Activated naive CD4-positive, alpha-beta T cell treated with anti-CD3 and anti-CD28 coated beads, Interleukin-2, amount 10 ng/mL, durations not matched to agents 7 days and 5 days (primary cell): ENCODE measurements at regions of chr4 and their contacts with region 1.

Region 1: DNA sequence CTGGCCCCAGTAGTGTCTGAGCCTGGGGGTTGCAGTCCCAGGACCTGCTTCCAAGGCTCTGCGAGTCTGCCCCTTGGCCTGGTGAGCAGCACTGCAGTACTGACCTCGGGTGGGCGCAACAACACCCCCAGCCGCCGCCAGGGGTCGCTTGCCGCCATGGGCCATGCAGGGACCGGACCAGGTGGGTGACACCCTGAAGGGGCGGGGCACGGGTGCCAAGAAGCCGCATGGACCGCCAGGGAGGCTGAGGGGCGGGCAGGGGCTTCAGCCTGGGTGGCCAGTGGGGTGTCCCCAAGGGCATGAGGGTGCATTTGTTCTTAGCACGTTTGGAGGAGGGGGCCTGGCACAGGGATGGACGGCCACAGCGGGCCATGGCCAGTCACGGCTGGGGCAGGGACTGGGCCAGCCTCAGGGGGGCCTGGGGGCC is 25.0 kb downstream of the TACC3 start:
- DNase-seq: peak; percentile 85
- H3K4me3 Mint-ChIP-seq: no peak overlapping the region
- H3K27ac Mint-ChIP-seq: no peak overlapping the region
- H3K4me1 Mint-ChIP-seq: peaks cover 5% of the 10 kb centered on the region
- H3K27me3 Mint-ChIP-seq: no peaks in the 10 kb centered on the region

Region 2: DNA sequence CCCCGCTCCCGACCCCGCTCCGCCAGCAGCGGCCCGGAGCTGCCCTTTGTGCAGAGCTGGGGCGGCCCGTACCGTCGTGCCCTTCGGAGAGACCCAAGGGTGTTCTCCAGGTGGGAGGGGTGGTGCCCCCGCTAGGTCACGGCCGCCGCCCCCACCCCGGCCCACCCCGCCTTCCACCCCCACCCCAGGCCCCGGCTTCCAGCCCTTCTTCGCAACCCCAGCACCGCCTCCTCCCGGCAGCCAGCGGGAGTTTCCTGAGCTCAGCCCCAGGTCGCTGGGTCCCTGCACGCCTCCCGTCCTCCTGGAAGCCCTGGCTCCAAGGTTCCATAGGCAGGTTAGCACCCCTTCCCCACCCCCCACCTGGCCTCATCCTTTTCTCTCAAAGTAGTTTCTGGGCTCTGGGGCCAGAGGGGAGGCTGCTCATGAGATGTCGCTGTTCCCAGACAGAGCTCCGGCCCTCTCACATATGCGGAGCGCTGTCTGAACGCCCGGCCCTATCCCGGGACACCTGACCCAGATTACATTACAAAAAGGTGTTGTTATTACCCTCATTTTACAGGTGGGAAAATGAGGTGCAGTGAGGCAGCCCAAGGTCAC is 21.6 kb after region 1 on chr4:
- CTCF ChIA-PET with region 1: interaction called, 13 read pairs
- DNase-seq: peak; percentile 59
- H3K4me3 Mint-ChIP-seq: peak overlapping the region; percentile 56
- H3K27ac Mint-ChIP-seq: no peak overlapping the region
- H3K4me1 Mint-ChIP-seq: peaks cover 7% of the 10 kb centered on the region
- H3K27me3 Mint-ChIP-seq: peaks cover 76% of the 10 kb centered on the region

Region 3: DNA sequence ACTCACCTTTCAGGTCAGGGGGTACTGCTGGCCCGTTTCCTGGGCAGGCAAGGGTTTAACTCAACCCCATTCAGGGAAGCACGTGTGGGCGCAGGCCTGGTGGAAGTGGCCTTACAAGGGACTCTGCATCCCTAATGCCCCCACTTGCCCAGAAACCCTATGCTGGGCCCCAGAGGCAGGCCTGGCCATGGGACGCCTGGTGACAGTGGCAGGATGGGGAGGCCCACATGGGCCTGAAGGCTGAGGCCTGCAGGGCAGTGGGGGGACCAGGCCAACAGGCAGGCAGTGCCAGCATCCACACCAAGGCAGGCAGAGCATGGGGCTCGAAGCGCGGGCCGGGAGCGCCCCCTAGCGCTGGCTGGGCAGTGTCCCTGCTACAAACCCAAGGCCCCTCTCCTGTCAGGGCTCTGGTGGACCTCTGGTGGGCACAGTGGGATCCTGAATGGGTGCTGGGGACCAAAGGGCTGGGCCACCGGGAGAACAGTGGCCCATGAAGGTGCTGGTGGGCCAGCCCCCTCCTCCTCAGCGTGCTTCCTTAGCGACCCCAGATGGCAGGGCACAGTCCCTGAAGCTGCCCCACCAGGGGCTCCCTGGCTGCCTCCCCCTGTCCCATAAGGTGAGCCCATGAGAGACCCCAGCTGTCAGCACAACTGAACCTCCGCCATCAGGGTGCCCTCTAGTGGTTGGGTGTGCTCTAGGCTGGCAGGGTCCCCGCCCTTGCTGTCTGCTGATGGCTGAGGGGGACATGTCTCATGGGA is 63.7 kb after region 1 on chr4:
- CTCF ChIA-PET with region 1: interaction called, 63 read pairs
- DNase-seq: peak; percentile 82
- H3K4me3 Mint-ChIP-seq: no peak overlapping the region
- H3K27ac Mint-ChIP-seq: no peak overlapping the region
- H3K4me1 Mint-ChIP-seq: no peaks in the 10 kb centered on the region
- H3K27me3 Mint-ChIP-seq: no peaks in the 10 kb centered on the region

Region 4: DNA sequence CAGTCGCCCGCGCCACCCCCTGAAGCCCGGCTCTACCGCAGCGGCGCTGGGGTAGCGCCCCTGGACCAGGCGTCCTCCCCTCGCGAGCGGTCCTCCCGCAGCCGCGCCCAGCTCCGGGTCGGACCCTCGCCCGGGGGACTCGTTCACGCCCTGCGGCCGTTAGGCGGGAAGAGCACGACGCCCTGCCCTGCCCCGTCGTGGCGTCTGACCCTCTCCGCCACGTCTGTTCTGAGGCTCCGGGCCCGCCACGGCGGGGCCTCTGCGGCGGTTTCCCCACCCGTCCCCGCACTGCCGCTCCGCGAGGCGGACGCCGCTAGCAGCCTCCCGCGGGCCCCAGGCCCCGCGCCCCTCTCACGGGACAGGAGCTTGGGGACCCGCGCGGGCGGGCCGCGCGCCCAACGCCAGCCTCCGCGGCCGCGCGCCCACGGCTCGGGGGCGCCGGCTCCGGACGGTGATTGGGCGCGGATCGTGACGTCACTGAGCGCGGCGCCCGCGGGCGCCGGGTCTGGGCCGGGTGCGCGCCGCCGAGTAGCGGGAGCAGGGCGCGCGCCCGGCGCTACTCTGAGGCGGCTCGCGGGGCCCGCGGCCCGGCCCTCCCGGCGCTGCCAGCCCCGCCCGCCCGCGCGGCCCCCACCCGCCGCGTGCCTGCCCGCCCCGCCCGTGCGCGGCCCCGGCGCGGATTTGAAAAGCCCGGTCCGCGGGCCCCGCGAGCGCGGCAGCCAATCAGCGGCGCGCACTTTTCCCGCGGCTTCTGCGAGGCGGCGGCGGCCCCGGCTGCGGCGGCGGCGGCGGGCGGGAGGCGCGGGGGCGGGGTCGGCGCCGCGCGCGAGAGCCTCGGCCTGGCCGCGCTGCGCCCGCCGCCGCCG is 124.5 kb after region 1 on chr4 and contains the start of gene NSD2:
- CTCF ChIA-PET with region 1: no interaction called
- DNase-seq: peak; percentile 91
- H3K4me3 Mint-ChIP-seq: peak within 1 kb of the TSS; percentile 97
- H3K27ac Mint-ChIP-seq: peak within 1 kb of the TSS; percentile 97
- H3K4me1 Mint-ChIP-seq: peaks cover 44% of the 10 kb centered on the region
- H3K27me3 Mint-ChIP-seq: peaks cover 11% of the 10 kb centered on the region